ENCODE measurements at regions of chr3 and their contacts with region 1.

Region 1: DNA sequence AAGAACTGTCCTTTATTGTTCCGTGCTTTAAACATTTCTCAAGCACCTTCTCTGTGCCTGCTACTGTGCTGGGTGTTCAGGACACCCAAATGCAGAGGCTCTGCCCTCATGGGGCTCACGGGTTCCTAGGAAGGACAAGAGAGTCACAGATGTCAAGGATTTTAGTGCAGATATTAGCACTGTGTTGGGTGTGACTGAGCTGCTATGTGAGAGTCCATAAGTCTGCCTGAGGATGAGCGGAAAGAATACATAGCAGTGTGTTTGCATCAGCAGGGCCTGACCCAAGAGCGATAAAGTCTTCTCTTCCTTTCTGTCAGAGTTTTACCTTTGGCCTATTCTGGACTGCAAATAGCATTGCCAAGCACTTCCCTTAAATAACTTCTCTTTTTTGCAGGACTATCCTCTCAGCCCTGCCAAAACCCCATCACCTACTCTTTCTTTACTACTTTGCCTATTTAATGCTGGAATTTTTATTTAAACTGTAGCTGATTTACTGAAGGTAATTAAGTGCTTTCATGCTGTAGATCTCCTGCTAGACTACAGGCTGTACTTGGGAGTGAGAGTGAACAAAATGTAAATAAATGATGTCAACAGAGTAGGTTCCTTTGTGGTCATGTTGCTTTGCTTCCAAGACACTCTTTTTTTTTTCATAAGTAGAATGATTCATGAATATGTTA is 459.4 kb upstream of the TPRG1 start:
- DNase-seq: no peak
- ATAC-seq: peak; percentile 56
- H3K4me3 Mint-ChIP-seq: no peak overlapping the region
- H3K27ac Mint-ChIP-seq: peak overlapping the region; percentile 74
- H3K4me1 Mint-ChIP-seq: peaks cover 17% of the 10 kb centered on the region
- H3K27me3 Mint-ChIP-seq: no peaks in the 10 kb centered on the region
- CTCF ChIP-seq: no peak

Region 2: DNA sequence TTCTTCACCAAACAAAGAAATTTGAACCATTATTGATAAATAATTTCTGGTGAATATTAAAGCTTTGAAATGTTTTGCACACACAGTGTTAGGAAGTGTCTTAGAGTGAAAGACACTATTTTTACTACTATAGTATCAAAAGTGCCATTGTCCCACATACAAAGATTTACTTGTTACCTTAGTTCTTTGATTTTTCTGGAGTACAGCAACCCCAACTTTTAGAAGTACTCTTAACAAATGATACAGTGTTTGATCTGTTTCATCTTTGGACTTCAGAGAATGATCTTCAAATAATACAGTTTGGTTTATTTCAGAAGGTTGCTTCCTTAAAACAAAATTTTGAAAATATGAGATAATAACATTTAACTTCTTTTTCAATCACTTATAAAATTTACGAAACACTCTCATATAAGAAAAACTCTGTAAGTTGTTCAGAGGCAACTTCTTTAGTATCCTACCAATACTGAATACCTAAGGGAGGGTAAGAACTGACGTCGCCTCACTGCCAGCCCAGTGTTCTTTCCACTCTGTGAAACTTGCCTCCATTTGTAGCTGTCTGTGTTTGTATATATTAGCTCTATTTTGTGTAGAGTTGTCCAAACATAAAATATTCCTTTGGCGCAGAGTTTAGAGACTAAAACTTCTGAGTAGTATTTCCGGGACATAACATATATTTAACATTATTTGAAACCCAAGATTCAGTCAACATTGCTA is 94.2 kb before region 1 on chr3:
- CTCF ChIA-PET with region 1: no interaction called
- POLR2A ChIA-PET with region 1: interaction called, 11 read pairs
- intact Hi-C with region 1: no loop called
- DNase-seq: no peak
- ATAC-seq: no peak
- H3K4me3 Mint-ChIP-seq: no peak overlapping the region
- H3K27ac Mint-ChIP-seq: no peak overlapping the region
- H3K4me1 Mint-ChIP-seq: no peaks in the 10 kb centered on the region
- H3K27me3 Mint-ChIP-seq: no peaks in the 10 kb centered on the region
- CTCF ChIP-seq: no peak

Region 3: DNA sequence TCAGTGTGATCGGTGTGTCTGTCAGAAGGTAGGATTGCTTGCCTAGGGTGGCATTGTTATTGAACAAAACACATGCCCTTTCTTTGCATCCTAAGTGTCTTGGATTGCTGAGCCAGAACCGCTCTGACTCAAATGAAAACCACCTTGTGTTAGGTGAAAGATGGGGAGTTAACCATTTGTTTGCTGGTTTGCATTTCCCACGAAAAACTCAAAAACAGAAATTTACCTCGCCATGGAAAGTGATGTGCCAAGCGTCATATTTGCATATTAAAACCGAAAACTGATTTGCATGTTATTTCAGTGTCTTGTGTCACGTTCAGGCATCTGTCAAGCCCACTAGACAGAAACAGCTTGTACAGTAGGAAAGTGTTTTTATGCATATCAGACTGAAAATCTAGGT is 15.3 kb before region 1 on chr3:
- CTCF ChIA-PET with region 1: no interaction called
- POLR2A ChIA-PET with region 1: no interaction called
- intact Hi-C with region 1: loop called (anchors 2 kb)
- DNase-seq: no peak
- ATAC-seq: peak; percentile 80
- H3K4me3 Mint-ChIP-seq: peak overlapping the region; percentile 20
- H3K27ac Mint-ChIP-seq: peak overlapping the region; percentile 86
- H3K4me1 Mint-ChIP-seq: peaks cover 72% of the 10 kb centered on the region
- H3K27me3 Mint-ChIP-seq: no peaks in the 10 kb centered on the region
- CTCF ChIP-seq: no peak

Region 4: DNA sequence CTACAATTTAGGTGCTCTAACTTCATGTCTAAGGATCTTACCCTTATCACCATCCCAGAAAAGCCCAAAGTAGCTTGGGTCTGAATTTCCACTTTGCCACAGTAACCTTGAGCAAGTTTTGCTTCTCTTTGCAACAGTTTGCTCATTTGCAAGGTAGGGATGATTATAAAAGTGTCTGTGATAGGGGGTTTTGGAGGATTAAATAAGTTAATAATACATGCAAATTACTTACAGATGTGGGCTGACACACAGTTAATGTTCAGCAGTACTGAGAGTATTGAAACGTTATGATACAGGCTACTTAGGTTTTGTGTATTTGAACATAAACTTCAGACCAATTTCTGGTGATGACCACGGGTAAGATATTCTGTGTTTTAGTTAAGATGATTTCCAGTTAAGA is 14.7 kb after region 1 on chr3:
- CTCF ChIA-PET with region 1: no interaction called
- POLR2A ChIA-PET with region 1: interaction called, 5 read pairs
- intact Hi-C with region 1: loop called (anchors 2 kb)
- DNase-seq: no peak
- ATAC-seq: peak; percentile 78
- H3K4me3 Mint-ChIP-seq: no peak overlapping the region
- H3K27ac Mint-ChIP-seq: peak overlapping the region; percentile 57
- H3K4me1 Mint-ChIP-seq: peaks cover 54% of the 10 kb centered on the region
- H3K27me3 Mint-ChIP-seq: no peaks in the 10 kb centered on the region
- CTCF ChIP-seq: no peak

Measured in activated B cell treated with CpG ODN at 0.5 μM for 24 hours (primary cell).